ENCODE measurements at regions of chr4 and their contacts with region 1.

Region 1: GRCh38 chr4:73864365-73864764 is 4.8 kb upstream of the CXCL1 start:
- DNase-seq: peak; percentile 43
- H3K4me3 Mint-ChIP-seq: no peak overlapping the region
- H3K27ac Mint-ChIP-seq: no peak overlapping the region
- H3K4me1 Mint-ChIP-seq: peaks cover 8% of the 10 kb centered on the region
- H3K27me3 Mint-ChIP-seq: no peaks in the 10 kb centered on the region
- CTCF ChIP-seq: peak; percentile 68

Region 2: GRCh38 chr4:73662709-73663546 is 201.4 kb before region 1 on chr4:
- CTCF ChIA-PET with region 1: interaction called, 12 read pairs
- intact Hi-C with region 1: loop called (anchors 1 kb)
- DNase-seq: no peak
- H3K4me3 Mint-ChIP-seq: no peak overlapping the region
- H3K27ac Mint-ChIP-seq: peak overlapping the region; percentile 50
- H3K4me1 Mint-ChIP-seq: peaks cover 33% of the 10 kb centered on the region
- H3K27me3 Mint-ChIP-seq: no peaks in the 10 kb centered on the region
- CTCF ChIP-seq: peak; percentile 28

Region 3: DNA sequence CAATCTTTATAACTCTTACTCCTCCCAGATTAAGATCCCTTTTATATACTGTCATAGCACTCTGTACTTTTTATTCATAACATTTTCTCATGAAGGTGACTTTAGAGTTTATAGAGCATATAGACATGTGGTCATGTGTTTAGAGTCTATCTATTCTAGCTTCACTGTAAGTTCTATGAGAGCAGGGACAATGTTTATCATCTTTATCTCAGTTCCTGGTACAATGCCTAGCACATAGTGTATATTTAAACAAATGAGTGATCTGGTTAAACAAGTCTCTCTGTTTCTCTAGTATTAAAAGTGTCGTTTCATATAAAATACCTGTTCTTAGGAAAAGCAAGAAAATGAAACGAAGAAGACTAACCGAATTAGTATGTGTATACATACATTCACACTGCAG is 24.6 kb before region 1 on chr4:
- CTCF ChIA-PET with region 1: interaction called, 4 read pairs
- intact Hi-C with region 1: loop called (anchors 2 kb)
- DNase-seq: no peak
- H3K4me3 Mint-ChIP-seq: peak overlapping the region; percentile 64
- H3K27ac Mint-ChIP-seq: peak overlapping the region; percentile 68
- H3K4me1 Mint-ChIP-seq: peaks cover 30% of the 10 kb centered on the region
- H3K27me3 Mint-ChIP-seq: no peaks in the 10 kb centered on the region
- CTCF ChIP-seq: no peak

Measured in Calu3 (cell line).